ENCODE measurements at regions of chr2 and their contacts with region 1.

Region 1: GRCh38 chr2:157122776-157123175 is 134.7 kb upstream of the GALNT5 start:
- DNase-seq: no peak
- ATAC-seq: no peak
- H3K4me3 ChIP-seq: no peak overlapping the region
- H3K4me3 Mint-ChIP-seq: no peak overlapping the region
- H3K27ac ChIP-seq: no peak overlapping the region
- H3K27ac Mint-ChIP-seq: no peak overlapping the region
- H3K4me1 ChIP-seq: no peaks in the 10 kb centered on the region
- H3K4me1 Mint-ChIP-seq: no peaks in the 10 kb centered on the region
- H3K27me3 ChIP-seq: peaks cover 0 to 8% of the 10 kb centered on the region in 2 experiments
- H3K27me3 Mint-ChIP-seq: peaks cover 3 to 4% of the 10 kb centered on the region in 2 donors

Region 2: DNA sequence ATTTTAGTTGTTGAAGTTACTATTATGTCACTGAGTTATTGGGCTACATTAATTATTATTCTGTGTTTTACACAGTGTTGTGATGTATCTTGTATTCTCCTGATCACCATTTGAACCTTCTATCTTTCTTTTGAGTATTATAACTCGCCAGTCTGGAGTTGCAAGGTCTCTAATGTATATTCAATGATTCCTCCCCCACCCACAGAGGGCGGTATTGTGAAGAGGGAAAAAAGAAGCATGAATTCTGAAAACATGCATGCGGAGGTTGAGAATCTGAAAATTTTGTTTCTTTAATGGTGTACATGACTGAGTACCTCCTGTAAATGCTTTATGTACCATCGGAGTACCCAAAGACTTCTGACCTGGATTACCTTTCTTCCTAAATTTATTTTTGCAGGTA is 1056.9 kb before region 1 on chr2:
- CTCF ChIA-PET with region 1: no interaction called
- POLR2A ChIA-PET with region 1: interaction called in 1 of 2 experiments, 11 read pairs
- DNase-seq: peak in 1 of 35 experiments; percentile 1
- ATAC-seq: no peak
- H3K4me3 ChIP-seq: no peak overlapping the region
- H3K4me3 Mint-ChIP-seq: no peak overlapping the region
- H3K27ac ChIP-seq: no peak overlapping the region
- H3K27ac Mint-ChIP-seq: no peak overlapping the region
- H3K4me1 ChIP-seq: no peaks in the 10 kb centered on the region
- H3K4me1 Mint-ChIP-seq: no peaks in the 10 kb centered on the region
- H3K27me3 ChIP-seq: no peaks in the 10 kb centered on the region
- H3K27me3 Mint-ChIP-seq: peaks cover 0 to 4% of the 10 kb centered on the region in 2 donors